Activated naive CD4-positive, alpha-beta T cell treated with anti-CD3 and anti-CD28 coated beads for 36 hours (primary cell): ENCODE measurements at regions of chr12 and their contacts with region 1.

Region 1: DNA sequence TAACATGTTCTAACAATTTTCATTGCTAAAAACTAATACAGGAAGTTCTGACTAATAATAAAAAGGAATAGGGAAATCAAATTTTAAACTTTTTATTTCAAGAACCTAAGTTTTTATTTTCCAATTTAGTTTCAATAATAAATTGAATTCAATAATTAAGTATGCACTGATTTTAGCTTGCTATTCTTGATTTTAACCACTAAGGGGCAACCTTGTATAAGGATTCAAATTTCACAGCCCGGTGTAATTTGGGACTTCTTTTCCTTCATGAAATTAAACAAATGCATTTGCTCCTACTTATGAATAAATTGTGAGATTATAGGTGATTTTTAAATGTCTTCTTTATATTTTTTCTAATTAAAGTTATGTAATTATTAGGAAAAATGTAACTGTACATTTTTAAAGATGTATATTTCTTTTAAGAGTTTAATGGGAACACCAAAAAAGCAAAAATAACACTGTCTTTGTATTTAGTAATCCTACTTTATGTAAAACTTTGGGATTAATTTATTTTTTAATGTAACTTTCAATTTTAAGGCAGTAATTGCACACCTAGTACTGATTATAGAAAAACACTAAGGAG is 241.4 kb upstream of the PDZRN4 start:
- DNase-seq: no peak
- H3K4me3 Mint-ChIP-seq: no peak overlapping the region
- H3K27ac Mint-ChIP-seq: no peak overlapping the region
- H3K4me1 Mint-ChIP-seq: no peaks in the 10 kb centered on the region
- H3K27me3 Mint-ChIP-seq: peaks cover 9% of the 10 kb centered on the region

Region 2: DNA sequence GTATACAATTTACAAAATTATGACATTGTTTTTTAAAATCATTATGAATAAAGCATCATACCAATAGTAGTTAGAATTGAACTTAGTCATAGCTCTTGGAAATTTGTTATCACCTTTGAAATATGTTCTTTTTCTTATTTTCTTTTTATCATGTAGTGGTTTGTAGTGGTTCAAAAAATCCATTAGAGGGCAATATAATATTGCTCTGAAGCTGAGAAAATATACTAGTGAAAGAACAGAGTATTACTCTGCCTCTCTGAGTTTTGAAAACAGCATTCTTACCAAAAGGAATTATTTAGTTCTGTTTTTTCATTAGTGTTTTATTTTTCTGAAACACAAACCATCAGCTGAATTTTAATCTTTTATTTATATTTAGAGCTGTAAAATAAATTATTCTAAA is 317.6 kb after region 1 on chr12:
- CTCF ChIA-PET with region 1: interaction called, 3 read pairs
- intact Hi-C with region 1: loop called (anchors 5 kb)
- DNase-seq: no peak
- H3K4me3 Mint-ChIP-seq: no peak overlapping the region
- H3K27ac Mint-ChIP-seq: no peak overlapping the region
- H3K4me1 Mint-ChIP-seq: no peaks in the 10 kb centered on the region
- H3K27me3 Mint-ChIP-seq: peaks cover 2% of the 10 kb centered on the region

Region 3: DNA sequence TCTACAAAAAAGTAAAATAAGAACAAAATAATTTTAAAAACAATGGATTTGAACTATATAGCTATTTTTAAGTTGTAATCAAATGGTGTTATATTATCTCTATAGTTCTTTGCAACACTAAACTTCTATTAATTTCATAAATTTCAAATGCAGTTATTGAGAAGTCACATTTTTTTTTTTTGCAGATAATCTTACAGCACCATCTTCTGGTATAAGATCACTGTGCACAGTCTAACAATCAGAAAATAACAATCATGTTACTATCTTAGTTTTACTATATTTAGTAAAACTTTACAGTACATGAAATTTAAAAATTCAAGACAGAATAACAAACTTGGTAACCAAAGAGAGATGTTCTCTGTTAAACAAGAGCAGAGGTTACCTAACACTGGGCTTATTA is 1157.4 kb after region 1 on chr12:
- CTCF ChIA-PET with region 1: no interaction called
- intact Hi-C with region 1: loop called (anchors 10 kb)
- DNase-seq: no peak
- H3K4me3 Mint-ChIP-seq: no peak overlapping the region
- H3K27ac Mint-ChIP-seq: no peak overlapping the region
- H3K4me1 Mint-ChIP-seq: peaks cover 2% of the 10 kb centered on the region
- H3K27me3 Mint-ChIP-seq: no peaks in the 10 kb centered on the region

Region 4: GRCh38 chr12:42574851-42575266 is 1628.2 kb after region 1 on chr12:
- CTCF ChIA-PET with region 1: no interaction called
- intact Hi-C with region 1: loop called (anchors 10 kb)
- DNase-seq: no peak
- H3K4me3 Mint-ChIP-seq: no peak overlapping the region
- H3K27ac Mint-ChIP-seq: no peak overlapping the region
- H3K4me1 Mint-ChIP-seq: no peaks in the 10 kb centered on the region
- H3K27me3 Mint-ChIP-seq: peaks cover 2% of the 10 kb centered on the region